ENCODE measurements at regions of chr12 and their contacts with region 1.

Region 1: DNA sequence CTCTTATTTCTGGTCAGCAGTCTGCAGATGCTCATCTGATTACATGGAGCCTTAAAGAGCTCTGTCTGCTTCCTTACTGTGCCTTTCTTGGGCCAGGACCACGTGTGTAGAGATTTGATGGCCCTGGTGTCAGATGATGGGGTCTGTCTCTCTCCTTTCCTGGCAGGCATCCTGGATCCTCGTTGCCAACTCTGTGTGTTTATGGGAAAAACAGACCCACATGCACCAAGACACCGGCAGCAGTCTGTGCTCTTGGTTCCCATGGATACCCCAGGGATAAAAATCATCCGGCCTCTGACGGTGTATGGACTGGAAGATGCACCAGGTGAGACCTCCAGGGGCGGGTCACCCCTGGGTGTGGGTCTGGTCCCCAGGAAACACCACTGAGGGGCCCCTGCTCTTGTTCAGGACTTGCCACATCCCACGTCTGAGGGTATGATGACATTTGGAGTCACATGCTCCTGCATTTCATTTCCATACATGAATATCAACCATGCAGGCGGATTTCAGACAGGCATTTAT is 18.5 kb upstream of the ALDH2 start:
- DNase-seq: no peak
- ATAC-seq: no peak
- H3K4me3 ChIP-seq: no peak overlapping the region
- H3K27ac ChIP-seq: no peak overlapping the region
- H3K4me1 ChIP-seq: peaks cover 2% of the 10 kb centered on the region
- H3K27me3 ChIP-seq: no peaks in the 10 kb centered on the region
- CTCF ChIP-seq: no peak
- POLR2A ChIP-seq: no peak

Region 2: GRCh38 chr12:111792155-111792855 is 44.1 kb after region 1 on chr12:
- intact Hi-C with region 1: loop called (anchors 5 kb)
- DNase-seq: peak; percentile 27 to 83 (median 45)
- ATAC-seq: no peak
- H3K4me3 ChIP-seq: no peak overlapping the region
- H3K27ac ChIP-seq: peak overlapping the region in 1 of 4 donors; percentile 9
- H3K4me1 ChIP-seq: peaks cover 16% of the 10 kb centered on the region
- H3K27me3 ChIP-seq: no peaks in the 10 kb centered on the region
- CTCF ChIP-seq: no peak
- POLR2A ChIP-seq: no peak

Region 3: GRCh38 chr12:111887926-111888745 is 139.9 kb after region 1 on chr12:
- intact Hi-C with region 1: no loop called
- DNase-seq: peak in 1 of 4 donors; percentile 17
- ATAC-seq: no peak
- H3K4me3 ChIP-seq: no peak overlapping the region
- H3K27ac ChIP-seq: no peak overlapping the region
- H3K4me1 ChIP-seq: no peaks in the 10 kb centered on the region
- H3K27me3 ChIP-seq: no peaks in the 10 kb centered on the region
- CTCF ChIP-seq: no peak
- POLR2A ChIP-seq: no peak

Measured in body of pancreas (tissue), 4 donors.